ENCODE measurements at regions of chr11 and their contacts with region 1.

Region 1: GRCh38 chr11:61947486-61948210 is 2.5 kb upstream of the BEST1 start:
- DNase-seq: peak; percentile 77
- ATAC-seq: peak; percentile 83
- H3K4me3 Mint-ChIP-seq: no peak overlapping the region
- H3K27ac Mint-ChIP-seq: no peak overlapping the region
- H3K4me1 Mint-ChIP-seq: no peaks in the 10 kb centered on the region
- H3K27me3 Mint-ChIP-seq: peaks cover 8% of the 10 kb centered on the region

Region 2: DNA sequence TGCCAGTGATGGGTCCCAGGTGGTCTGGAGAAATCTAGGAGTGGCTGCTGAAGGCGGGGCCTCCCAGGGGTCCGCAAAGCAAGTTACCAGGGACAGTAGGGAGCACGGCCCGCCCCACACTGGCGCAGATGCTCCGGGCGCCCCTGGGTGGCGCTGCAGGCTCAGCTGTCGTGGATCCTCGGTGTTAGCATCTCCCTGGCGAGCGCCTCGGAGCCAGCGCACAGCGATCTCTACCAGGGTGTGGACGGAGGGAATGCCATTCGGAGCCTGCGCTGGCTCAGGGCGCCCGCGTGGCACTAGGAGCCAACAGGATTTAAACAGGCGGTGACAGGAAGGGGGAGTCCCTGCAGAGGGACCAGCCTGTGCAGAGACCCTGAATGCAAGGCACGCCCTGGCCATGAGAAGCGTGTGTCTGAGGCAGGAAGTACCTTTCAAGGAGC is 76.5 kb before region 1 on chr11:
- CTCF ChIA-PET with region 1: interaction called, 23 read pairs
- POLR2A ChIA-PET with region 1: no interaction called
- DNase-seq: peak; percentile 77
- ATAC-seq: peak; percentile 94
- H3K4me3 Mint-ChIP-seq: peak overlapping the region; percentile 54
- H3K27ac Mint-ChIP-seq: peak overlapping the region; percentile 61
- H3K4me1 Mint-ChIP-seq: peaks cover 8% of the 10 kb centered on the region
- H3K27me3 Mint-ChIP-seq: no peaks in the 10 kb centered on the region

Region 3: GRCh38 chr11:61935861-61936260 is 11.8 kb before region 1 on chr11:
- CTCF ChIA-PET with region 1: interaction called, 22 read pairs
- POLR2A ChIA-PET with region 1: no interaction called
- DNase-seq: no peak
- ATAC-seq: no peak
- H3K4me3 Mint-ChIP-seq: no peak overlapping the region
- H3K27ac Mint-ChIP-seq: no peak overlapping the region
- H3K4me1 Mint-ChIP-seq: no peaks in the 10 kb centered on the region
- H3K27me3 Mint-ChIP-seq: peaks cover 22% of the 10 kb centered on the region

Region 4: DNA sequence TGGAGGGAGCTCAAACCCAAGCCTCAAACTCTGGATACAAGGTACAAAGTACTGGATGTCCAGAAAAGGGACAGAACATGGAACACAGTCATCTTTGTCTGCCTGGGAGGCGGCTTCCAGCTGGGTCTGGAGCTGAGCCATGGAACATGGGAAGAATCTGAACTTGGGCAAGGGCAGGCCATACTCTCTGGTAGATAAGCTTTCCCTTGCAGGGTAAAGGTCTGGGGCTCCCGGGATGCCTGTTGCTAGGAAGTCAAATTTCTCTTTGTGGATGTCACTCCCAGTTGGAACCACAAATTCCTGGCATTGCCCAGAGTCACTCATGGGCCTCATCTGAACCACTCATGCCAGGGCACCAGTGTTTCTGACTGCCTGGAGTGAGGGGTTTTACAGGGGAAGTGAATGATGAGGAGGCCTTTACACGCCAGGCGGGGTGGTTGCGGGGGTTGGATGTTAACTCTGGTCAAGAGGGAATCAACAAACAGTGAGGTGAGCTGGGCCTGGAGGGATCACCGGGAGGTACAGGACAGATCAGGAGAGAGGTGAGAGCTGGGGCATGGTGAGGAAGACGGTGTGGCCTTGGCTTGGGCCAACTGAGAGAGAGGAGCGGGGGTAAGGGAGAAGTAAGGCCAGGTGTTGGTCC is 14.0 kb after region 1 on chr11:
- CTCF ChIA-PET with region 1: interaction called, 17 read pairs
- POLR2A ChIA-PET with region 1: no interaction called
- DNase-seq: no peak
- ATAC-seq: peak; percentile 2
- H3K4me3 Mint-ChIP-seq: no peak overlapping the region
- H3K27ac Mint-ChIP-seq: no peak overlapping the region
- H3K4me1 Mint-ChIP-seq: peaks cover 37% of the 10 kb centered on the region
- H3K27me3 Mint-ChIP-seq: no peaks in the 10 kb centered on the region

Region 5: DNA sequence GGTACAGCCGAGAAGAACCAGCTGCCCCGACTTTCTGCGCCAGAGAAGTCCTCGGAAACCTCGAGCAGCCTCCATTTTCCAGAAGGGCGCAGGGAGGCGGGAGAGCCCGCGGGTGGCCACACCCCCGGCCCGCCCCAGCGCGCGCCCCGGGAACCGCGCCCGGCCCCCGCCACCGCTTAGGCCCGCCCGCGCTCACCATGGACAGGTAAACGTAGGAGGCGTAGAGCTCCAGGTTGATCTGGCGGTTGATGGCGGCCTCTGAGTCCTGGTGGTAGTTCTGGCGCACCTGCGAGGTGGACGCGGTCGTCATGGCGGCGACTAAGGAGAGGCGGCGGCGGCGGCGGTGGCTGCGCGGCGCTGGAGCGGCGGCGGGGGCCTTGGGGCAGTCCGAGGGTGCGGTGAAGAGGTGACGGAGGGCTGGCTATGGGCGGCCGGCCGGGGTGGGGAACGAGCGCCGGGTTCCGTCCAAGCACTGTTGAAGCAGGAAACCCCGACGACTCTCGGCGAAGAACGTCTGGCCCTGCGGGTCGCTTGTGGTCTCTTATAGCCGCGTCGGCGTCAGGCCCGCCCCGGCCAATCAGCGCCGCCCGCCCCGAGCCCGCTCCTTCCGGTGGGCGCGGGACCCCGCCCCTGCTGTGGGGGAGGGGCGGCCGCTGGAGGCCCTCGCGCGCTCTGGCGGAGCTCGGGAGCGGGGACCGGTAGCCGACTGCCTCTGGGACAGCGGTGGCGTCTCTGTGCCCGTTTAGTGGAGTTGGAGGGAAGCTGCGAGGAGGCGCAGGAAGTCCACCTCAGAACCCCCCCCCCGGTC is 19.7 kb after region 1 on chr11 and contains the start of gene FTH1:
- CTCF ChIA-PET with region 1: interaction called, 17 read pairs
- POLR2A ChIA-PET with region 1: interaction called, 3 read pairs
- DNase-seq: peak; percentile 90
- ATAC-seq: peak; percentile 76
- H3K4me3 Mint-ChIP-seq: peak within 1 kb of the TSS; percentile 93
- H3K27ac Mint-ChIP-seq: peak within 1 kb of the TSS; percentile 97
- H3K4me1 Mint-ChIP-seq: peaks cover 65% of the 10 kb centered on the region
- H3K27me3 Mint-ChIP-seq: no peaks in the 10 kb centered on the region
- total RNA-seq, gene FTH1: 709 to 727 TPM